ENCODE measurements at regions of chr2 and their contacts with region 1.

Region 1: DNA sequence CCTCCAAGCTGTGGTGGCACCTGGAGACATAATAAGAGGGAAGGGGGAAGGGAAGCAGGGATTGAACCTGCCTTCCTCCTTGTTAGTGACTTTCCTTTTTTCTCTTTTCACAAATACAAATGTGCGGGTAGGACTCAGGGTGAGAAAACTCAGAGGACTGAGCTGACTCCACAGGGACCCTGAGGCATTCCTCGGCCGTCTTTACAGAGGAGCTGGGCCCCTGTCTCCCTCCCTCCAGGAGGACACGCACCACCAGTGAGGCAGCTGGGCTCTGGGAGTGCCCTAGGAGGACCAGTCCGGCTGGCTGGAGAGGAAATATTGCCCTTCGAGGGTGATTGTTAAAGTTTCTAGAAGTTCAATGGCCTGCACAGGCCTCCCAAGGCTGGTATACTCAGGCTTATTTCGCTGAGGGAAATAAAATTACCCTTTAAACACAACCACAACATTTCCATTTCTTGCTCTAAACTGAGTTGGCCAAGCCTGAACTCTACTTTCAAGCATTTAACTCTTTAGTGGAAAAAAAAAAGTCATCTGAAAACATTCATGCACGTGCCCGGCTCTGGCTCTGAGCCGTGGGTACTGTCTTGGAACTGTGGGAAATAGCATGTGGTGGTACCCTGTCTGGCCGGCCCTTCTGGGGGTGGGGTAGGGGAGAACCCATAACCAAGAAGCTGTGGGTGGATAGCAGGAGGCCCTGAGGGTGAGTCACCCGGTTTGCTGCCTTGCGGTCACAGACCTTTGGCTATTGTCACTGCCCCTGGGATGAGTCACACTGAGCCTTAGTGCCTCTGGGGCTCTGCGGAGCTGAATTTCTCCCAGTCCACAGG is 116.0 kb downstream of the COPS8 start:
- DNase-seq: no peak
- H3K4me3 ChIP-seq: no peak overlapping the region
- H3K27ac ChIP-seq: no peak overlapping the region
- H3K4me1 ChIP-seq: peaks cover 6% of the 10 kb centered on the region
- H3K27me3 ChIP-seq: peaks cover 0 to 2% of the 10 kb centered on the region in 2 experiments
- CTCF ChIP-seq: no peak
- POLR2A ChIP-seq: no peak

Region 2: GRCh38 chr2:237154082-237154638 is 47.5 kb before region 1 on chr2:
- CTCF ChIA-PET with region 1: no interaction called
- POLR2A ChIA-PET with region 1: no interaction called
- dilution Hi-C with region 1: no loop called
- intact Hi-C with region 1: no loop called
- DNase-seq: peak; percentile 59
- H3K4me3 ChIP-seq: no peak overlapping the region
- H3K27ac ChIP-seq: no peak overlapping the region
- H3K4me1 ChIP-seq: peaks cover 8% of the 10 kb centered on the region
- H3K27me3 ChIP-seq: no peaks in the 10 kb centered on the region
- CTCF ChIP-seq: peak; percentile 73 to 75
- POLR2A ChIP-seq: no peak

Region 3: GRCh38 chr2:237256887-237257286 is 55.2 kb after region 1 on chr2:
- CTCF ChIA-PET with region 1: no interaction called
- POLR2A ChIA-PET with region 1: no interaction called
- dilution Hi-C with region 1: no loop called
- intact Hi-C with region 1: loop called (anchors 2 kb)
- DNase-seq: peak; percentile 69
- H3K4me3 ChIP-seq: no peak overlapping the region
- H3K27ac ChIP-seq: no peak overlapping the region
- H3K4me1 ChIP-seq: peaks cover 19% of the 10 kb centered on the region
- H3K27me3 ChIP-seq: peaks cover 0 to 5% of the 10 kb centered on the region in 2 experiments
- CTCF ChIP-seq: no peak
- POLR2A ChIP-seq: no peak

Measured in endothelial cell of umbilical vein (primary cell).